ENCODE measurements at regions of chr2 and their contacts with region 1.

Region 1: DNA sequence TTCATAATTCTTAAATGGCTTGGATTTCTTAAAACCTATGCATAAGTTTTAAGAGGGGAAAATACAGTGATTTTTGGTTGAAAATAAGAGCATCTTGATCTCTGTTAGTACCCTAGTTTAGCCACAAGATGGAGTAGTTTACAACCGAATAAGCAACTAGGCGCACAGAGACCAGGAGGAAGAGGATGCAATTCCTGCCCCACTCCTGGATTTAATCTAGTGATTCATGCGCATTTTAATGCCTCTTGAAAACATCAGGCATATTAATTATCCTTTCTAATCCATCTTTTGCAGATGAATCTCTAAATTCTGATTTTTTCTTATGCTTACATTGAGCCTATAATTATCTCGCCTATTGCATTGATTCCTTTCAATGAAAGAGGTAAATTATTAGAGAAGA is 76.7 kb downstream of the MRPS9 start:
- DNase-seq: peak; percentile 71
- H3K4me3 ChIP-seq: no peak overlapping the region
- H3K27ac ChIP-seq: no peak overlapping the region
- H3K4me1 ChIP-seq: no peaks in the 10 kb centered on the region
- H3K27me3 ChIP-seq: no peaks in the 10 kb centered on the region
- CTCF ChIP-seq: peak; percentile 77

Region 2: GRCh38 chr2:105235388-105236054 is 121.0 kb after region 1 on chr2:
- CTCF ChIA-PET with region 1: interaction called, 5 read pairs
- POLR2A ChIA-PET with region 1: no interaction called
- intact Hi-C with region 1: loop called (anchors 1 kb)
- DNase-seq: peak; percentile 87
- H3K4me3 ChIP-seq: no peak overlapping the region
- H3K27ac ChIP-seq: no peak overlapping the region
- H3K4me1 ChIP-seq: no peaks in the 10 kb centered on the region
- H3K27me3 ChIP-seq: no peaks in the 10 kb centered on the region
- CTCF ChIP-seq: peak; percentile 83

Region 3: DNA sequence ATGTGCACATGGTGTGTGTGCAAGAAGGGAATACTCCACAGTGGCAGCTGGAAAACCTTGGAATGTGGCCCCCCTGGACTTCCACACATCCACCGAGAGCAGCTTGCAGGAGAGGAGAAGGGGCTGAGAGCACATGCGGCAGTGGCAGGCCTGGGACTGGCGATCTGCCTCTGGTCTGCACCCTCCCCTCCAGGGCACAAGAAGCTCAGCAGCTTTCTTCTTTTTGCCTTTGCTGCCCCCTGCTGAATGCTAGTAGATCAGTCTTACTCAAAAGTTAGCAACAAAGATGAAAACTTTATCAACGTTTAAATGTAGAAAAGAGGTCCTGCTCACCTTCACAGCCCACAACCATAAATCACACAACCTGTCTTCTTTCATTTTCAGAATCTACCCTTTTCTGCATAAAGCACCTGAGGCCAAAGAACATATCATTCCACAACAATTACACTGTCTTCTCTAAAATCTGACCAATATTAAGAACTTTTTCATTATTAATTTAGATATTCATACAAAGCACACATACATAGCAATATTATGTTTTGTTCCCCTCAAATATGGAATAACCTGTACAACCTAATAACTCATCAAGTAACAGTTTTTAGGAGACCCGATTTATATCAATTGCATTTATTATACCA is 180.4 kb after region 1 on chr2:
- CTCF ChIA-PET with region 1: no interaction called
- POLR2A ChIA-PET with region 1: no interaction called
- intact Hi-C with region 1: loop called (anchors 5 kb)
- DNase-seq: peak; percentile 67
- H3K4me3 ChIP-seq: no peak overlapping the region
- H3K27ac ChIP-seq: no peak overlapping the region
- H3K4me1 ChIP-seq: no peaks in the 10 kb centered on the region
- H3K27me3 ChIP-seq: no peaks in the 10 kb centered on the region
- CTCF ChIP-seq: peak; percentile 65

Region 4: DNA sequence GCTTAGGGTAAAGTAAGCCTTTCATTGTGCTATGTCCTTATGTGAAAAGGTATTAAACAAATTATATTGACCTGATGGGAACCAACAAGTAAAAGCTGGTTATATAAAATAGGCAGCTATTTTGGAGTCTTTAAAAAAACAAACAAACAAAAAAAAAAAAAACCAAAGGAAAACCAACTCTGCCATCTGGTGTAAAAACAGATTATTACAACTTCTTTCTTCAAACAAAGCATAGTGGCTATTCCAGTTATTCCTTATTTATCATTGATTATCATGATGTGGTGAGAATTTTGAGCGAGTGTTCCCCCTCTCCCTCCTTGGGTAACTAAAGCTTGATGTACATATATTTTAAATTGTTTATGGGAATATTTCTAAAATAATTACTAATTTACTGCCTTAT is 406.7 kb after region 1 on chr2:
- CTCF ChIA-PET with region 1: no interaction called
- POLR2A ChIA-PET with region 1: no interaction called
- intact Hi-C with region 1: loop called (anchors 10 kb)
- DNase-seq: peak; percentile 7
- H3K4me3 ChIP-seq: no peak overlapping the region
- H3K27ac ChIP-seq: no peak overlapping the region
- H3K4me1 ChIP-seq: no peaks in the 10 kb centered on the region
- H3K27me3 ChIP-seq: no peaks in the 10 kb centered on the region
- CTCF ChIP-seq: peak; percentile 60

Region 5: GRCh38 chr2:107072150-107072940 is 1957.8 kb after region 1 on chr2:
- CTCF ChIA-PET with region 1: no interaction called
- POLR2A ChIA-PET with region 1: no interaction called
- intact Hi-C with region 1: no loop called
- DNase-seq: no peak
- H3K4me3 ChIP-seq: no peak overlapping the region
- H3K27ac ChIP-seq: no peak overlapping the region
- H3K4me1 ChIP-seq: no peaks in the 10 kb centered on the region
- H3K27me3 ChIP-seq: no peaks in the 10 kb centered on the region
- CTCF ChIP-seq: no peak

Measured in A673 (cell line).